Spleen (tissue), 13 donors: ENCODE measurements at regions of chr6 and their contacts with region 1.

Region 1: DNA sequence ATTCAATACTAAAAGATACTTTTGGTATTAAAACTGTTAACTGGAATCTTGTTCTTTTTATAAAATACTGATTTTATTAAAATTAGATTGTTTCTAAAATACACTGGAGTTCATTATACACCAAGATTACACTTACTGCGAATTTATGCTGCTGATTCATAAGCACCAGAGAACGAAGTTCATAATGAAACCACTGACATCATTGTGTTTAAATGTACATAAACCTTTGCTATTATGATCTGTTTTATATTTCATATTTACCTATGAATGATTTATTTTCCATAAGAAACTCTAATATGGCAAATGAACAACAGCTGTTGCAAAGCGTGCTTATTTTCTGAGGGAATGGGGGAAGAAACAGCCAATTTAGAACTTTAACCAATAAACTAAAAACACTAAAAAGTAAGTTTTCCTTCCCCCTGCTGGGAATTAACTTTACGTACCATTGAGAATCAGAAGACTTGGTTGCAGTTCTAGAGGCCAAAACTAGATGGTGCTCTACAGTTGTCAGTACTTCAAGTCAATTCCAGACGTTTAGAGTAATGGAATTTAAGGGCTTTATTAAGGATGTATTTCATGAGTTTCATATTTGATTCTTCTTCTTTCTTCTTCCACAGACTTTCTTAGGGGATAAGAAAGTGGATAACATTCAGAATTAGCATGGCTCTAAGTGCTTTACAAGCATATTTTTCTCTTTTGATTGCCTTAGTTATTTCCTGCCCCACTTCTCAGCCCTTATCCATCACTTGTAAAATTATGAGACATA is 30.8 kb upstream of the COL19A1 start:
- DNase-seq: no peak
- H3K4me3 ChIP-seq: no peak overlapping the region
- H3K27ac ChIP-seq: no peak overlapping the region
- H3K4me1 ChIP-seq: peaks cover 0 to 10% (median 3%) of the 10 kb centered on the region in 6 donors
- H3K27me3 ChIP-seq: no peaks in the 10 kb centered on the region
- CTCF ChIP-seq: peak; percentile 43 to 83 (median 77)
- POLR2A ChIP-seq: no peak

Region 2: GRCh38 chr6:68593564-68593963 is 1242.0 kb before region 1 on chr6:
- intact Hi-C with region 1: no loop called
- DNase-seq: no peak
- H3K4me3 ChIP-seq: no peak overlapping the region
- H3K27ac ChIP-seq: no peak overlapping the region
- H3K4me1 ChIP-seq: no peaks in the 10 kb centered on the region
- H3K27me3 ChIP-seq: no peaks in the 10 kb centered on the region
- CTCF ChIP-seq: no peak
- POLR2A ChIP-seq: no peak

Region 3: DNA sequence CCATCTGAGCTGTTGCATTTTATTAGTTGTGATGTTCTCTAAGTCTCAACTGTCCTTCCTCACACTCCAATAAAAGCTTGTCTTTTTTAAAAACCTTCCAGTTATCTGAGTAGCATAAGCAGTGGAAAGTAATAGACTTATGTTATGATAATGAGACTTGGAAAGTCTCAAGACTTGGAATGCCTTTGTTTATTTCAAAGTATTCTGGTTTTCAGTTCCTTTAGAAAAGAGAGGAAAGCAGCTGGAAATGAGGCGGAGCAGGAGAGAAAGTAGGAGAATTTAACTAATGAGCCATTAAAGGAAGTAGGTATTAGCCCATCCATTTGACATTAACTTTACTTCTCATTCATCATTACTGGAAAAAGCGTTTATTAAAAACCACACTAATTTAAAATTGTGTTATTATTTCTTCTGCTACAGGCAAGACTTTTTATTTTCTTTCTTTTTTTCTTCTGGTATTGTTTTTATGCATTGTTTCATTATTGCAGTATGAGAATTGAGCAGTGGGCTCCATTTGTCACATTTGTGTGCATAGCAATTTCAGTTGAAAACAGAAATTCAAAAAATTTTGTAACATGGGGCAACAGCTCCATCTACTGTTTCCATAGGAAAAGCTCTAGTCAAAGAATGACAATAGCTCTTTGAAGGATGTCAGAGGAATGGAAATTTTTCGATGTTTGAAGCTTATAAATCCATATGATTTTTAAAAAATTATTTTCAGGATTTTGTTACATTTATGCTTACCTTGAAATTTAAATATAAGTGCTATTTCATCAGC is 272.4 kb after region 1 on chr6:
- intact Hi-C with region 1: loop called (anchors 5 kb)
- DNase-seq: no peak
- H3K4me3 ChIP-seq: no peak overlapping the region
- H3K27ac ChIP-seq: no peak overlapping the region
- H3K4me1 ChIP-seq: peaks cover 0 to 3% (median 0%) of the 10 kb centered on the region in 6 donors
- H3K27me3 ChIP-seq: no peaks in the 10 kb centered on the region
- CTCF ChIP-seq: peak; percentile 17 to 71 (median 56)
- POLR2A ChIP-seq: no peak